ENCODE measurements at regions of chr12 and their contacts with region 1.

Region 1: GRCh38 chr12:119115296-119115905 is 63.3 kb upstream of the HSPB8 start:
- DNase-seq: peak; percentile 50
- H3K4me3 ChIP-seq: no peak overlapping the region
- H3K27ac ChIP-seq: no peak overlapping the region
- H3K4me1 ChIP-seq: no peaks in the 10 kb centered on the region
- H3K27me3 ChIP-seq: no peaks in the 10 kb centered on the region
- CTCF ChIP-seq: peak; percentile 69 to 94 (median 77)
- POLR2A ChIP-seq: no peak

Region 2: DNA sequence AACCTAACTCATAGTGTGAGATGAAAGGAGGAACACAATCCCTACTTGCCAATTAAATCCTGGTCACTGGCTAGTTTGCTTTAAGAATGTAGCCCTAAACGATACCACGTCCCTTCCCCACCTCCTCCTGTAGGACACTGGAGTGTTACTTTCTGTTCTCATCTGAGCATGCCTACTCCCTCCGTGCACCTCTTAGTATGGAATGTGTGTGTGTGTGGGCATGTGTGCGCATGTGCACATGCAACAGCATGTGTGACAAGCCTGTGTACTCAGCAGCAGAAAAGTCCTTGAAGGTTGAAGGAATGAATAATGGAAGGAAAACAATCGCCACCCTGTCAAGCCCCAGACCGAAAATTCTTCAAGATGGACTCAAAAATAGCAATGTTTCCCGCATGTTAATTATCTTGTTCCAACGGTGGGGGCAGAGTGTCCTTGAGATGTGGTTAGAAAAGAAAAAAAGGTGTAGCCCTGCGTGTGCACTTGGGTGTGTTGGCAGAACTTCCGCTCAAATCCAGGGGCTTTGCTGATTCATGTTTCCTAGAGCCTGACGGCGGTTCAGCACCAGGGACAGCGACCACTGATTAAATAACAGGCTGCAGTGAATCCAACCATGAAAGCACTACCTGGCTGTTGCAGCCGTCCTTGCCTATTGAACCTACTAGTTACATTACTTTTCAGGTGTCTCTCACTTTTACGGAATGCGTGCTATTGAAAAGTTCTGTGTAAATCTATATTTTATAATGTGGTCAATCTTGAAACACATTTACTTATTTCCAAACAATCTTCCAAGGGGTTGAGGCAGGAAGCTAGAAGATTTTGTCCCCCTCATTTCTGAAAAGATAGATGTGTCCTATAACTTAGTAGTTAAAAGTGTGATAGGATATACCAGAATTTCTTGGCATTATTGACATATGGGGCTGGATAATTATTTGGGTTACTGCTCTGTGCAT is 54.3 kb before region 1 on chr12:
- intact Hi-C with region 1: no loop called
- DNase-seq: peak; percentile 77
- H3K4me3 ChIP-seq: no peak overlapping the region
- H3K27ac ChIP-seq: no peak overlapping the region
- H3K4me1 ChIP-seq: no peaks in the 10 kb centered on the region
- H3K27me3 ChIP-seq: no peaks in the 10 kb centered on the region
- CTCF ChIP-seq: no peak
- POLR2A ChIP-seq: no peak

Region 3: GRCh38 chr12:119412811-119413794 is 297.7 kb after region 1 on chr12:
- intact Hi-C with region 1: loop called (anchors 10 kb)
- DNase-seq: peak; percentile 87
- H3K4me3 ChIP-seq: no peak overlapping the region
- H3K27ac ChIP-seq: no peak overlapping the region
- H3K4me1 ChIP-seq: no peaks in the 10 kb centered on the region
- H3K27me3 ChIP-seq: no peaks in the 10 kb centered on the region
- CTCF ChIP-seq: peak; percentile 60 to 87 (median 73)
- POLR2A ChIP-seq: no peak